ENCODE measurements at regions of chr10 and their contacts with region 1.

Region 1: DNA sequence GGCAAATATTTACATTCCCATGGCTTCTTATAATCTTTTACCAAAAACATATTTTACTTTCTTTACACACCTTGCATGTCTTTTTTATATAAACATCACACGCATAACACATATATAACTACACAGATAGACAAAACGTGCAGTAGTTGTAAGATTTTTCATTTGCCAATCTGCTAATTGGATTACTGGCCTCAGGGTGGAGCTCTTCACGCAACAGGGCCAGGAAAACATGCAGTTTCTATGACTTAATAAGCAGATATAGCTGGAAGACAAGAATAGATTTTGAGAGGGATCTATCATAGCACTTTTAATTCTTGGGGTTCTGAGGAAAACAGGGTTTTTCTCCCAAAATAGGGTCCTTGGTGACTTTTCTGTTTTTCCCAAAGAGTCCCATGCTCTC is 12.7 kb downstream of the ACADSB start:
- DNase-seq: no peak
- ATAC-seq: no peak
- H3K4me3 Mint-ChIP-seq: no peak overlapping the region; the same call in 1 of the 2 replicates
- H3K27ac Mint-ChIP-seq: no peak overlapping the region
- H3K4me1 Mint-ChIP-seq: peaks cover 65% of the 10 kb centered on the region
- H3K27me3 Mint-ChIP-seq: peaks cover 68% of the 10 kb centered on the region
- CTCF ChIP-seq: no peak

Region 2: DNA sequence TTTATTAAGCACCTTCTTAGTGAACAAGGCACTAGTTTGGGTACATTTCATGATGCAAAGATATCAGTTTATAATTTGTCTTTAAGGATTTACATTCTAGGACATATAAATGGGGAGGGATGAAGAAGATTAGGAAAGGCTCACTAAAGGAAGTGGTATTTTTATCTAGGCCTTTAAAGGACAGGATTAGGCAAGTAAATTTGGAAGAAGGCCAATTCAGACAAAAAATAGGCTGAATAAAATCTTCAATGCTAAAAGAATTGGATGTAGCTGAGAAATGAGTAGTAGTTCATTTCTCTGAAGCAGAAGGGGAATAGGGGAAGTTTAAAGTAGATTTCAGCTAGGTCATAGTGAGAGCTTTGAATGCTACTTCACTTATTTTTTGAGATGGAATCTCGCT is 137.4 kb before region 1 on chr10:
- CTCF ChIA-PET with region 1: no interaction called
- POLR2A ChIA-PET with region 1: no interaction called
- DNase-seq: no peak
- ATAC-seq: no peak
- H3K4me3 Mint-ChIP-seq: no peak overlapping the region
- H3K27ac Mint-ChIP-seq: no peak overlapping the region
- H3K4me1 Mint-ChIP-seq: peaks cover 13% of the 10 kb centered on the region
- H3K27me3 Mint-ChIP-seq: peaks cover 19% of the 10 kb centered on the region
- CTCF ChIP-seq: no peak

Region 3: GRCh38 chr10:122980209-122981065 is 41.1 kb before region 1 on chr10 and contains the start of gene PSTK:
- CTCF ChIA-PET with region 1: interaction called, 12 read pairs
- POLR2A ChIA-PET with region 1: no interaction called
- DNase-seq: peak; percentile 87
- ATAC-seq: peak; percentile 98
- H3K4me3 Mint-ChIP-seq: peak within 1 kb of the TSS; percentile 81
- H3K27ac Mint-ChIP-seq: peak within 1 kb of the TSS; percentile 96
- H3K4me1 Mint-ChIP-seq: peaks cover 13% of the 10 kb centered on the region
- H3K27me3 Mint-ChIP-seq: peaks cover 5% of the 10 kb centered on the region; the same call in 1 of the 2 replicates
- CTCF ChIP-seq: peak; percentile 77
- total RNA-seq, gene PSTK: 4.0 to 6.2 TPM (median 5.6 TPM) in 3 replicates

Region 4: GRCh38 chr10:123009206-123009820 is 12.2 kb before region 1 on chr10:
- CTCF ChIA-PET with region 1: interaction called, 10 read pairs
- POLR2A ChIA-PET with region 1: interaction called, 6 read pairs
- DNase-seq: peak; percentile 27
- ATAC-seq: peak; percentile 41
- H3K4me3 Mint-ChIP-seq: peak overlapping the region; percentile 99
- H3K27ac Mint-ChIP-seq: peak overlapping the region; percentile 70; the same call in 1 of the 2 replicates
- H3K4me1 Mint-ChIP-seq: peaks cover 30% of the 10 kb centered on the region
- H3K27me3 Mint-ChIP-seq: peaks cover 42% of the 10 kb centered on the region
- CTCF ChIP-seq: no peak

Region 5: DNA sequence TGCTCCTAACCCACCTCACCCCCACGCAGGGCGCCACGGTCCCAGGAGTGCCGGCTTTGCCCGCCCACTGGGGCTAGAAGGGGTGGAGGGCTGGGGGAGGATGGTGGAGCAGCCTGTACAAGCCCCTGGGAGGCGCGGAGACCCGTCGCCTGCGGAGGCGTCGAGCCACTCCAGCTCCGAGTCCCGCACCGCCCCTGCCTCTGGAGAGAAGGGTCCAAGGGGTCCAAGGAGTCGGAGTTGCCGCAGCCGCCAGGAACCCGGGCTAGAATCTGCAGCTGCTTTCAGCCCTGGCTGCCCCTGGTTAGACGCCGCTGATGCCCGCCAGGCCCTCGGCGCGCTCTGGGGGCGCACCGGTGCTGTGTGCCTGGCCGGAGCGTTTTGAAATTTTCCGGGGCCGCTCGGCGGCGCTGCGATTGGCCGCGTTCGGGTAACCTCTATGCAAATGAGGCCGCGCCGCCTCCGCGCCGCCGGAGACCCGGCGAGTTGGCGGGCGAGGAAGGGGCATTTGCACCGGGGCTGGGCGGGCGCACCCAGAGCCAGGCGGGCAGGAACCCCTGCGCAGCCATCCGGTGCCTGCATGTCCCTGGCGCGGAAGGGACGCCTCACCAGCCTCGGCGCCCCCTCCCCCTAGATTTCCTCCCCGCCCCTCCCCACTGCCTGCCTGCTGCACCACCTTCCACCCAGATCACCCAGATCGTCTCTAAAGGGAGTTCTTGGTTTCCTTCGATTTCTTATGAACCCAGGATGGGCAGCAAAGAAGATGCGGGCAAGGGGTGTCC is 126.3 kb after region 1 on chr10 and contains the start of gene HMX2:
- CTCF ChIA-PET with region 1: no interaction called
- POLR2A ChIA-PET with region 1: no interaction called
- DNase-seq: peak; percentile 83
- ATAC-seq: peak; percentile 27
- H3K4me3 Mint-ChIP-seq: peak within 1 kb of the TSS; percentile 62
- H3K27ac Mint-ChIP-seq: no peak within 1 kb of the TSS
- H3K4me1 Mint-ChIP-seq: peaks cover 72% of the 10 kb centered on the region
- H3K27me3 Mint-ChIP-seq: peaks cover 94% of the 10 kb centered on the region
- CTCF ChIP-seq: no peak
- total RNA-seq, gene HMX2: 0.59 to 1.7 TPM (median 1.4 TPM) in 3 replicates

Measured in WTC11 (cell line).